ENCODE measurements at regions of chr11 and their contacts with region 1.

Region 1: GRCh38 chr11:17978553-17979287 is 34.1 kb downstream of the SERGEF start:
- DNase-seq: peak in 2 of 5 donors; percentile 22 to 36
- H3K4me3 ChIP-seq: no peak overlapping the region
- H3K27ac ChIP-seq: no peak overlapping the region
- H3K4me1 ChIP-seq: no peaks in the 10 kb centered on the region
- H3K27me3 ChIP-seq: no peaks in the 10 kb centered on the region
- CTCF ChIP-seq: no peak
- EP300 ChIP-seq: no peak
- POLR2A ChIP-seq: no peak

Region 2: DNA sequence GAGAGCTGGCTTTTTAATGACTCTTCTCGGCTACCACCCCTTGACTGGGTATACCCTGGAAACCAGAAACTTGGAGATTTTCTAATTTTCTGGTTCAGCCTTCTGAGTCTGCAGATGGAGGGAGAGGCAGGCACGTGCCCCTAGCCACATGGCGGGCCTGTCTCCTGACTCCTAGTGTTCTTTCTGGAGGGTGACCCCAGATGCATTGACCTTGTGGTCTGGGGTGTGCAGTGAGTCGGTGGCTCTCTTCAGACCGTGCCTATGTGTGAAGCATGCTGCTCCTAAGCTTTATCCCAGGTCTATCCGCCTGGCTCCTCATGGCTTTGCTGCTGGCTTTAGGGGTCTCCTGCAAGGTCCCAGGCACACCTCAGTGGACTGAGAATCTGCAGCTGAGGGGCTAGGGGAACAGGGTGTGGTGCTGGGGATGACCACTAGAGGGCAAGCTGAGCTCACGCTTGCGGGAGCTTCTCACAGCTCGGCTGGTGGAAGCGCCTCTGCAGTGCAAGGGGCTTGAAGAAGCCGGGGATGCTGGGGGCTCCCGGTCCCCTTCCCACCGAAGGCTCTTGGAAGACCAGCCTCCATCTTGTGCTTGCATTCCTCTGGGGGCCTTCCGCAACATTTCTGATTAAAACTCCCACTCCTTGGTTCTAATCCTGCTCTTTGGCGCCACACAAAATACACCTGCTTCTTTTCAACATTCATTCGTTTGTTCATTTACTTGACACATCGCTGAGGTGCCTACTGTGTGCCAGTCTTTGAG is 379.8 kb before region 1 on chr11:
- intact Hi-C with region 1: loop called (anchors 5 to 10 kb)
- DNase-seq: peak; percentile 33 to 78 (median 64)
- H3K4me3 ChIP-seq: no peak overlapping the region
- H3K27ac ChIP-seq: no peak overlapping the region
- H3K4me1 ChIP-seq: no peaks in the 10 kb centered on the region
- H3K27me3 ChIP-seq: no peaks in the 10 kb centered on the region
- CTCF ChIP-seq: peak; percentile 47 to 60 (median 56)
- EP300 ChIP-seq: no peak
- POLR2A ChIP-seq: no peak

Region 3: GRCh38 chr11:17730608-17731462 is 247.9 kb before region 1 on chr11:
- intact Hi-C with region 1: loop called (anchors 2 to 5 kb)
- DNase-seq: peak; percentile 44 to 83 (median 77)
- H3K4me3 ChIP-seq: no peak overlapping the region
- H3K27ac ChIP-seq: no peak overlapping the region
- H3K4me1 ChIP-seq: peaks cover 6% of the 10 kb centered on the region
- H3K27me3 ChIP-seq: no peaks in the 10 kb centered on the region
- CTCF ChIP-seq: peak; percentile 24 to 65 (median 57)
- EP300 ChIP-seq: no peak
- POLR2A ChIP-seq: no peak

Region 4: DNA sequence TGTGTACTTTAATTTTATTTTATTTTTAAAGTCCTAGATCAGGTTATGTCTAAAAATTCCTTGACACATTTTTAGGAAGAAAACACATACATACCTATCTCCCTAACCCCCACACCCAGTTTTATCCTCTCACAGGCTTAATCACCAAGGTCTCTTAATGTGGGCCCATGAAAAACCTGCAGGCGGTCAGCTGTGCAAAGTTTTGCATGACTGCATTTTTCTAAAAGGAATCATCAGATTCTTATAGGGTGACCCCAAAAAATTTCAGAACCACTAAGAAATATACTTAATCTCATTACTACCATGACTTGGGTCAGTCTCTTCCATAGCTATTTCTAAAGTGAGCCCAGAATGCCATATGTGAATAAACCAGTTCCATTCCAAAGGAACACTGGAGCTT is 307.1 kb after region 1 on chr11:
- intact Hi-C with region 1: no loop called
- DNase-seq: no peak
- H3K4me3 ChIP-seq: no peak overlapping the region
- H3K27ac ChIP-seq: no peak overlapping the region
- H3K4me1 ChIP-seq: no peaks in the 10 kb centered on the region
- H3K27me3 ChIP-seq: no peaks in the 10 kb centered on the region
- CTCF ChIP-seq: no peak
- EP300 ChIP-seq: no peak
- POLR2A ChIP-seq: no peak

Measured in ovary (tissue), 10 donors.